ENCODE measurements at regions of chr7 and their contacts with region 1.

Region 1: GRCh38 chr7:15764851-15765382 is 78.4 kb upstream of the MEOX2 start:
- DNase-seq: peak in 1 of 2 donors; percentile 60
- ATAC-seq: peak; percentile 50 to 86 (median 81)
- H3K4me3 ChIP-seq: no peak overlapping the region
- H3K27ac ChIP-seq: peak overlapping the region in 9 of 10 donors; percentile 25 to 84 (median 55)
- H3K4me1 ChIP-seq: peaks cover 0 to 32% (median 14%) of the 10 kb centered on the region in 9 donors
- H3K27me3 ChIP-seq: no peaks in the 10 kb centered on the region
- CTCF ChIP-seq: no peak

Region 2: DNA sequence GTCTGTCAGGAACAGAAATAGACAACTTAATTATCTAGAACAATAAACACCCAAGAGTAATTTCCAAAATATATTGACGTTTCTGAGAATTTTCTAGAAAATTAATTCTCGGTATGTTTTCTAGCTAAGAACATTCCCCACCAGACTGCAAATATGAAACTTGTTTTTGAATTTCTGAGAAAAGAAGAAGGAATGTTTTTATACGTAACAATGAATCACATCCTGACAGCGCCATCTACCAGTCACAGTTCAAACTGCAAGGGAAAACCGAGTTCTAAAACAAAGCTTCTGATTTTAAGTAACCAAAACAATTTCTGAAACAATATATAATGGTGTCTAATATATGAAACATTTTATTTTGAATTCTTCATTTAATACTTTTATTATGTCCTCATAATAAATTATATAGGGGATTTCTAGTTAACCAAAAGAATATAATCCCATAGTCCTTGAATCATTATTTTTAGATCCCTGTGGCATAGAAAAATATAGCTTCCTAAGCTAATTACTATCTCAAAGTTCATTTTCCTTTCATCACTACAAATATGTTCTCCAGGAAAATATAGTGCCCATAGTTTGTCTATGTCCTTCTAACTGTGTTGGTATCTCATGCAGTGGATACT is 44.0 kb before region 1 on chr7:
- intact Hi-C with region 1: loop called in 1 of 10 experiments (anchors 5 kb)
- DNase-seq: peak in 1 of 2 donors; percentile 52
- ATAC-seq: no peak
- H3K4me3 ChIP-seq: no peak overlapping the region
- H3K27ac ChIP-seq: peak overlapping the region in 3 of 10 donors; percentile 5 to 34 (median 9)
- H3K4me1 ChIP-seq: peaks cover 0 to 17% (median 4%) of the 10 kb centered on the region in 9 donors
- H3K27me3 ChIP-seq: no peaks in the 10 kb centered on the region
- CTCF ChIP-seq: peak; percentile 38 to 89 (median 72)

Region 3: GRCh38 chr7:15833008-15833407 is 68.1 kb after region 1 on chr7:
- intact Hi-C with region 1: loop called in 3 of 10 experiments (anchors 5 to 10 kb)
- DNase-seq: peak; percentile 60 to 74
- ATAC-seq: peak in 6 of 8 donors; percentile 28 to 70 (median 48)
- H3K4me3 ChIP-seq: no peak overlapping the region
- H3K27ac ChIP-seq: peak overlapping the region in 8 of 10 donors; percentile 2 to 61 (median 29)
- H3K4me1 ChIP-seq: peaks cover 0 to 51% (median 22%) of the 10 kb centered on the region in 9 donors
- H3K27me3 ChIP-seq: no peaks in the 10 kb centered on the region
- CTCF ChIP-seq: no peak

Measured in heart right ventricle (tissue), 16 donors.